Activated CD4-positive, alpha-beta memory T cell treated with anti-CD3 and anti-CD28 coated beads, Interleukin-2, amount 10 ng/mL, durations not matched to agents 7 days and 5 days (primary cell): ENCODE measurements at regions of chrX and their contacts with region 1.

Region 1: DNA sequence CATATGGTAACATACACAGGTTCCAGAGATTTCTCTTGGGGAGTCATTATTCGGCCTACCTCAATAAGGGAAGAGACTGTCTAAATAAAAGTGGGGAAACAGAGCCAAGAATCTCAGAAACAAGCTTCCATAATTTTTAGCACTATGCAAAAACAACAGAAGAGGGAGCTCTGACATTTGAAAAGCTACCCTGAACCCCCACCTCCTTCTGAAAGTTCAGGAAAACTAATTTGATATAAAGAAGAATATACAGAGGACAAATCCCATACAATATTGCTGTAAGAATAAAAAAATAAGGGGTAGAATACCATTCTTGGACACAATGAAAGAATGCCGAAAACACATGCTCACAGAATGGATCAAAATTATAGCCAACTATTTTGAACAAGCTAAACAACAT is 14.3 kb upstream of the ZNF41 start:
- DNase-seq: no peak
- H3K4me3 Mint-ChIP-seq: no peak overlapping the region
- H3K27ac Mint-ChIP-seq: no peak overlapping the region
- H3K4me1 Mint-ChIP-seq: peaks cover 7% of the 10 kb centered on the region
- H3K27me3 Mint-ChIP-seq: no peaks in the 10 kb centered on the region

Region 2: DNA sequence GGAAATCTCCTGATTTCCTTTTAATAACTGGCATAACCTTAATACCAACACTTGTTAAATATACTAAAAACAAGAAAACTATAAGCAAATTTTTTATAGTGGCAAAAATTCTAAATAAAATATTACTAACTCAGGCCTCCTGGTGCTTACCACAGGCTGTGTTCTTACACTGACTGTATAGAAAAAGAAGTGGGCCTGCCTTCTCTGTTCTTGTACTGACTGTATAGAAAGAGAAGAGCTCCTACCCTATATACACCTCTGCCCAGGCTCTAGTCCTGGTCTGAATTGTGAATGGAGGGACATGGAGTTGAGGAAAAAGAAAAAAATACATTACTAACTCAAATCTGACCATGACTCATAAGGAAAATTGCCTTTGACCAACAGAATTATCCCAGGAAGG is 21.8 kb before region 1 on chrX:
- CTCF ChIA-PET with region 1: no interaction called
- POLR2A ChIA-PET with region 1: no interaction called
- DNase-seq: no peak
- H3K4me3 Mint-ChIP-seq: no peak overlapping the region
- H3K27ac Mint-ChIP-seq: no peak overlapping the region
- H3K4me1 Mint-ChIP-seq: no peaks in the 10 kb centered on the region
- H3K27me3 Mint-ChIP-seq: no peaks in the 10 kb centered on the region

Region 3: GRCh38 chrX:47523297-47523696 is 26.0 kb after region 1 on chrX:
- CTCF ChIA-PET with region 1: interaction called, 43 read pairs
- POLR2A ChIA-PET with region 1: interaction called, 5 read pairs
- DNase-seq: peak; percentile 80
- H3K4me3 Mint-ChIP-seq: peak overlapping the region; percentile 66
- H3K27ac Mint-ChIP-seq: no peak overlapping the region
- H3K4me1 Mint-ChIP-seq: peaks cover 4% of the 10 kb centered on the region
- H3K27me3 Mint-ChIP-seq: no peaks in the 10 kb centered on the region